Left lung (tissue), 14 donors: ENCODE measurements at regions of chr18 and their contacts with region 1.

Region 1: GRCh38 chr18:11937874-11938478 is 29.9 kb upstream of the MPPE1 start:
- DNase-seq: peak; percentile 61 to 87 (median 72)
- ATAC-seq: peak; percentile 95
- H3K4me3 ChIP-seq: no peak overlapping the region
- H3K27ac ChIP-seq: no peak overlapping the region
- H3K4me1 ChIP-seq: peaks cover 0 to 9% of the 10 kb centered on the region in 2 donors
- H3K27me3 ChIP-seq: no peaks in the 10 kb centered on the region
- CTCF ChIP-seq: peak; percentile 61 to 72

Region 2: GRCh38 chr18:11983592-11983991 is 45.6 kb after region 1 on chr18:
- intact Hi-C with region 1: no loop called
- DNase-seq: peak in 2 of 4 donors; percentile 32 to 84
- ATAC-seq: no peak
- H3K4me3 ChIP-seq: peak overlapping the region in 1 of 2 donors; percentile 94
- H3K27ac ChIP-seq: no peak overlapping the region
- H3K4me1 ChIP-seq: peaks cover 9 to 73% of the 10 kb centered on the region in 2 donors
- H3K27me3 ChIP-seq: no peaks in the 10 kb centered on the region
- CTCF ChIP-seq: no peak

Region 3: GRCh38 chr18:11995445-11996189 is 57.6 kb after region 1 on chr18:
- intact Hi-C with region 1: loop called in 1 of 2 experiments (anchors 5 kb)
- DNase-seq: peak; percentile 59 to 87 (median 84)
- ATAC-seq: peak; percentile 94
- H3K4me3 ChIP-seq: no peak overlapping the region
- H3K27ac ChIP-seq: peak overlapping the region; percentile 62 to 72
- H3K4me1 ChIP-seq: peaks cover 18 to 33% of the 10 kb centered on the region in 2 donors
- H3K27me3 ChIP-seq: no peaks in the 10 kb centered on the region
- CTCF ChIP-seq: peak; percentile 69 to 90

Region 4: DNA sequence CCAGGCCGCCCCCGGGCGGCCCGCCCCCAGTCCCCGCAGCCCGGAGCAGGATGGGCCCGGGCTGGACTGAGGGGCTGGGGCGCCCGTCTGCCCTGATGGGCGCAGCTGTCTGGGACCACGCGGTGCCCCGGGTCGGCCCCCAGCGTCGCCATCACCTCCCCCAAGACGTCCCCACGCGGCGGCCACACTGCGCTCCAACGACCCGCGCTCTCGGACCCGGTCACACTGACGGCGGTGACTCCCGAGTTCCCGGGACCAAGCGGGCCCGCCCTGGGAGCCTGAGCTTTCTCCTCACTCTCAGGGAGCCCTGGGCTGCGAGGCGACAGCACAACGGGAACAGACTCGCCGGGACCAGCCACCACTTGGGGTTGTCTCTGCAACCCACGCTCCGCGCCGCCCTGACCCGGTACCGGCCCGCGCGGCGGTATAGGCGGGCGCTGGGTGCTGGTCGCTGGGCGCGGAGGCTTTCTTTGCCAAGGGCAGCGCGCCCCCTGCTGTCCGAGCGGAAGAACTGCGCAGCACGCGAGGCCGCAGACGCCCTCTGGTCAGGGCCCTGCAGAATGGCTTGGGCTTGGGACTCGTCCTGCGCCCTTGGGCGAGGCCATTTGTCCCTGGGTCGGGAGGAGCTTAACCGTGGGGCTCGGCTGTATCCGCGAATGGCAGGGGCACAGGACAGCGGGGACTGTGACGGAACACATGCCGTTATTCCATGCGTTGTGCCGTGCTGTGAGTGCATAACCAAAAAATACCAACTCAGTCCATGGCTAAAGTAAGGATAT is 100.9 kb after region 1 on chr18:
- intact Hi-C with region 1: loop called in 1 of 2 experiments (anchors 5 kb)
- DNase-seq: peak; percentile 82 to 96 (median 84)
- ATAC-seq: peak; percentile 99
- H3K4me3 ChIP-seq: peak overlapping the region; percentile 35 to 45
- H3K27ac ChIP-seq: no peak overlapping the region
- H3K4me1 ChIP-seq: peaks cover 3 to 13% of the 10 kb centered on the region in 2 donors
- H3K27me3 ChIP-seq: peaks cover 0 to 14% of the 10 kb centered on the region in 2 donors
- CTCF ChIP-seq: peak; percentile 98 to 100

Region 5: DNA sequence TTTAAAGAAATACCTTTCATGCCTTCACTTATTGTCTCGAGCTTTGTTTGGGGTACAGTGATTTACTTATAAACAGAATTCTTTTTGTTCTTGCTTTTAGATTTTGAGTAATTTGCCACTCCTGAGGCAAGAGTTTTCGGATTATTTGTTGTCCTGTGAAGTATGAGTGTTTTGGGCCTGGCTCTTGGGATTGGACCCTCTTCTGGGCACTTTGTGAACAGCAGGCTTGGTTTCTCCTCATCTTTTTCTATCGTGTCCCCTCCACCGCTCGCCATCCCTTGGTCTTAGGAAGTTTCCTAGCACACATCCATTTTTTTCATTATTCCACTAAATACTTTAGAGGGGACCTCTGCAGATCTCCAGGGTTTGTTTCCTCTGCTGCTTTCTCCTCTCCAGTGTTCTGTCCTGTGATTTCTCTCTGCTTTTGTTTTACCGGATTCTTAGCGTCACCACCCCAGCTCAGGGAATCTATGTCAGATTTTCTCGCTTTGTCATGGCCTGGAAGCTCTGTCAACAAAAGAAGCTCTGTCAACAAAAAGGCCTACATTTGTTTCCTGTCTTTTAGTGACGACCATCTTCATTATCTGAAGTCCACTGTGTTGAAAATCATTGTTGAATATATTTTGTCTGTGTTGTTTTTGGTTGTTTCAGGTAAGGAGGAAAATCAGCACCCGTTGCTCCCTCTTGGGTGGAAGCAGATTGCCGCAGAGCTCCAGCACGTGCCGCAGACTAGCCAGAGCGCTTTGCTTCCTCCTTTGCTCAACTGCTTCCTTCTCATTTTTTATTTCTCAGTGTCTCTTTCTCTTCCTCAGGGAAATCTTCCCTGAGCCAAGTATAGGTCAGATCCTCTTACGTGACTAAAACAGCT is 183.4 kb after region 1 on chr18:
- intact Hi-C with region 1: no loop called
- DNase-seq: no peak
- ATAC-seq: no peak
- H3K4me3 ChIP-seq: no peak overlapping the region
- H3K27ac ChIP-seq: no peak overlapping the region
- H3K4me1 ChIP-seq: no peaks in the 10 kb centered on the region
- H3K27me3 ChIP-seq: peaks cover 0 to 14% of the 10 kb centered on the region in 2 donors
- CTCF ChIP-seq: no peak